Mucosa of descending colon (tissue), 3 donors: ENCODE measurements at regions of chr17 and their contacts with region 1.

Region 1: DNA sequence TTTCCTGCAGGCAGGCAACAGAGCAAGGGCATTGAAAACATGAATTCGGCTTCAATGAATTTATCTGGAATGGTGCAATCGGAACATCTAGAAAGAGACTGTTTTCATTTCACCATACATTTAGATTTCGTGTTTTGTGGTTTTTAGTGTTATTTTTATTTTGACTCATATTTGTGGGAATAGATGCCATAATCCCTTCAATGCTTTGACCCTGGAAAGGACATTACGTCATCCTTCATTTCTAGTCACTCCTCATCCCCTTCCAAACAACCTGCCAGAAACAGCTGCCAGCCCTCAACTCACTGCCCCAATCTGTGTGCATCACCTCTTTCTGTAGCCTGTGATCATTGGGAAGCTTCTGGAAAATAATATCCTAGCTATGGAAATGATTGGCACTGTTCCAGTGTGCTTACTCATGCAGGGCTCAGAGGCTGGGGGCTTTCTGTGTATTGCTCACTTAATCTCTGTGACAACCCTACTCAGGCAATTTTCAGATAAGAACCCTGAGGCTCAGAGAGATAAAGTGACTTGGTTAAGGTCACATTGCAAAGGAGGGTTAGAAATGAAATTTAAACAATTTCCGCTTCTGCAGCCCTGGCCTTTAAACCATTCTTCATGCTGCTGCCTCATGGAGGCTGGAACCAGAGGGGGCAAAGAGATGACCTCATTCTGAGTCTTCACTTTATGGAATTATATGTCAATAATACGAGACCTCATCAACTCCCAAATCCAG is 9.5 kb upstream of the KSR1 start:
- DNase-seq: no peak
- ATAC-seq: no peak
- H3K4me3 ChIP-seq: no peak overlapping the region
- H3K4me1 ChIP-seq: no peaks in the 10 kb centered on the region
- CTCF ChIP-seq: no peak

Region 2: DNA sequence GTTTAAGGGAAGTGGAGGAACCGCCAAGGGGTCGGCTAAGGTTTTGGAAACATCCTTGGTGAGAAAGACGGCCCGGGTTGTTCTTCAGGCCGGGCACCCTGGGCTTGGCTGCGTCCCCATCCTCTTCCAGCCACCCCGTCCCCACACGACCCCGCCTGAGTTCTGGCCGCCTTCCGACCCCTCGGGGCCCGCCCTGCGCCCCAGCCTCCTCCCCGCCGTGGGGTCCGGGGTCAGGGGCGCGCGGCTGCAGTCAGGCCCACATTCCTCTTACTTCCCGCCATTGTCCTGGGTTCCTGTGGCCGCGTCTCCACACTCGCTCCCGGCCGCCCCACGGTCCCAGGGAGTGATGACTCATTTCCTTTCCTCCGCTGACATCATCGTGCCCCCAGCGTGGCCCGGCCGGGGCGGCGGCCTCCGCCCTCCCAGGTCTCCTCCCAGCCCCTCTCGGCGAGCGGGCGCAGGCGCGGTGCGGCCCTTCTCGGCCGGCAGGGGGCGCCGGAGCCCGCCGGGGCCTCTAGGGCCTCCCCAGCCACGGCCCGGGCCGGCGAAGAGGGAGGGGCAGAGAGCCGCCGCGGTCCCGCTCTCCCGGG is 93.2 kb before region 1 on chr17:
- intact Hi-C with region 1: no loop called
- DNase-seq: peak; percentile 86 to 94 (median 94)
- ATAC-seq: peak; percentile 96
- H3K4me3 ChIP-seq: peak overlapping the region; percentile 20
- H3K4me1 ChIP-seq: peaks cover 12% of the 10 kb centered on the region
- CTCF ChIP-seq: peak; percentile 95

Region 3: GRCh38 chr17:27381007-27381501 is 65.7 kb before region 1 on chr17:
- intact Hi-C with region 1: loop called in 1 of 2 experiments (anchors 10 kb)
- DNase-seq: peak; percentile 71 to 78 (median 75)
- ATAC-seq: peak; percentile 92
- H3K4me3 ChIP-seq: no peak overlapping the region
- H3K4me1 ChIP-seq: peaks cover 9% of the 10 kb centered on the region
- CTCF ChIP-seq: peak; percentile 72